Aorta (tissue), 5 donors: ENCODE measurements at regions of chr2 and their contacts with region 1.

Region 1: GRCh38 chr2:54691445-54692135 is 31.9 kb upstream of the EML6 start:
- DNase-seq: no peak
- ATAC-seq: no peak
- H3K4me3 ChIP-seq: no peak overlapping the region
- H3K27ac ChIP-seq: no peak overlapping the region
- H3K4me1 ChIP-seq: no peaks in the 10 kb centered on the region
- H3K27me3 ChIP-seq: no peaks in the 10 kb centered on the region

Region 2: GRCh38 chr2:54738281-54738680 is 46.7 kb after region 1 on chr2:
- intact Hi-C with region 1: loop called in 1 of 2 experiments (anchors 2 kb)
- DNase-seq: no peak
- ATAC-seq: no peak
- H3K4me3 ChIP-seq: no peak overlapping the region
- H3K27ac ChIP-seq: no peak overlapping the region
- H3K4me1 ChIP-seq: no peaks in the 10 kb centered on the region
- H3K27me3 ChIP-seq: no peaks in the 10 kb centered on the region

Region 3: DNA sequence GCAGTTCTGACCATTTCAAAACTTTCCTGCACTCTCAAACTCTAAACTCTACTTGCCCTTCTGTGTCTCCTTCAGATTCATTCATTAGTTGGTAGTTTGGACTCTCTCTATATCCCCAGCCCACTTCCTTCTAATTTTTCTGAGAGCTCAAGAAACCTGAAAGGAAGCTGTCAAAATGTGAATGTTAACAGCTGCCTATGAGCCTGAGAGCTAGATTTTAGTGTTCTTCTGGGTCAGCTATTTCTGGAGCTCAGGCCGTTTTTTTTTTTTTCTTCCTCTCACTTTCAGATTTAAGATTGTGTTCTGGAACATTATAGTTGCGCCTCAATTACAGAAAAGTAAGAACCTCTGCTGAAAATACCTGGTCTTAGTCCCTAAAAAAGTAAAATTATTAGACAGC is 285.6 kb after region 1 on chr2:
- intact Hi-C with region 1: no loop called
- DNase-seq: no peak
- ATAC-seq: no peak
- H3K4me3 ChIP-seq: peak overlapping the region in 1 of 2 donors; percentile 8
- H3K27ac ChIP-seq: no peak overlapping the region
- H3K4me1 ChIP-seq: peaks cover 2 to 24% of the 10 kb centered on the region in 2 donors
- H3K27me3 ChIP-seq: no peaks in the 10 kb centered on the region